ENCODE measurements at regions of chr2 and their contacts with region 1.

Region 1: DNA sequence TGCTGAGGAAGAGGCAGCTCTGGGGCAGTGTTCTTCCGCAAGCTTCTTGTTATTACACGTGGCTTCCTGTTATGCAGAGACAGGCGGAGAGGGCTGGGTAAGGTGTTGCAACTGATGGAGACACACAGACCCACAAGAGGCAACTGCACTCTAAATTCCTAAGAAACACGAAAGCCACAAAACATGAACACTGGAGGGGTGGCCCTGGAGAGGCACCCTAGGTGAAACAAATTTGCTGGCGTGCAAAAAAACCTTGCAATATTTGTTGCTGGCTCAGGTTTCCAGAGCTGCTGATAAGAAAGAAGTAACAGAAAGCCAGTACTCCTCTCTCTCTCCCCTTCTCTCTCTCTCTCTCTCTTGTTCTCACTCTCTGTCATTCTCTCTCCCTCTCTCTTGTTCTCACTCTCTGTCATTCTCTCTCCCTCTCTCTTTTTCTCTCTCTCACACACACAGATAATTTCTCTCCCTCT is 31.8 kb downstream of the ARHGAP25 start:
- DNase-seq: peak; percentile 84
- H3K4me3 Mint-ChIP-seq: peak overlapping the region; percentile 70
- H3K27ac Mint-ChIP-seq: peak overlapping the region; percentile 97
- H3K4me1 Mint-ChIP-seq: peaks cover 97% of the 10 kb centered on the region
- H3K27me3 Mint-ChIP-seq: no peaks in the 10 kb centered on the region

Region 2: DNA sequence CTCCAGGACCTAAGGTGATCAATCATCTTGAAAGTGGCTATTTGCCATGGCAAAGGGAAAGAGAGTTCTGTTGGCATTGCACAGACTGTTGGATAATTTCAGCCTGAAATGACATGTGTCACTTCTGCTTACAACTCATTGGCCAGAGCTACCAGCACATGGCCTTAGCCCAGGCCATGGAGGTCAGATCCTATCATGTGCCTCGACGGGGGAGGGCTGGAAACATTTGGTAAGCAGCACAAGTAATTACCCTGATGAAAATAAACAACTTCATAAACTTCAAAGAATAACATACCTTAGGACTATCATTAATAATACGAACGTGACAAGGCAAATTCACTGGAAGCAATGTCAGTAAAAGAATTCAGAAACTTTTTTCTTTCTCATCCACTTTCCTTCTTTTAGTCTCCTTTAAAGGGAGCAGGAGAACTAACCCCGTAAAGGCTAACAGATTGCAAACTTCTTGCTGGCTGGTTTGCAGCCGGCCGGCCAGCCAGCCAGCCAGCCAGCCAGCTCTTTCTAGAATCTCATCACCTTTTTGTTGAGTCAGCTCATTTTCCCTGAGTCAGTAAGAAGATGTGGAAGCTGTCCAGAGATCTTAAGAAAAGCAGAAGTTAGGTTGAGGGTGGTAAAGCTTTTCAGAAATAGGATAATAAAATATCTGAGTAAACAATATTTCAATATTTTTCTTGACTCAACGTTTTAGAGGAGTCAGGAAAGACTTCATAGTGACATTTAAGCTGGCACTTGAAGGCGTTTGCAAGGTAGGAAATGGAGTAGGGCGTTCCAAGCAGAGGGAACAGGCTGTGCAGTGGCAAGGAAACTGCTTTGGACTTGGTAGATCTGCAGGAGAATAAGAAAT is 478.6 kb before region 1 on chr2:
- CTCF ChIA-PET with region 1: no interaction called
- POLR2A ChIA-PET with region 1: no interaction called
- DNase-seq: no peak
- H3K4me3 Mint-ChIP-seq: no peak overlapping the region
- H3K27ac Mint-ChIP-seq: no peak overlapping the region
- H3K4me1 Mint-ChIP-seq: no peaks in the 10 kb centered on the region
- H3K27me3 Mint-ChIP-seq: peaks cover 23% of the 10 kb centered on the region

Region 3: GRCh38 chr2:68721482-68722101 is 44.8 kb before region 1 on chr2:
- CTCF ChIA-PET with region 1: interaction called, 15 read pairs
- POLR2A ChIA-PET with region 1: interaction called, 46 read pairs
- DNase-seq: peak; percentile 67
- H3K4me3 Mint-ChIP-seq: peak overlapping the region; percentile 58
- H3K27ac Mint-ChIP-seq: peak overlapping the region; percentile 95
- H3K4me1 Mint-ChIP-seq: peaks cover 99% of the 10 kb centered on the region
- H3K27me3 Mint-ChIP-seq: no peaks in the 10 kb centered on the region

Region 4: GRCh38 chr2:68734688-68735525 is 31.5 kb before region 1 on chr2 and contains the start of gene ARHGAP25:
- CTCF ChIA-PET with region 1: interaction called, 11 read pairs
- POLR2A ChIA-PET with region 1: interaction called, 356 read pairs
- DNase-seq: peak; percentile 68
- H3K4me3 Mint-ChIP-seq: no peak within 1 kb of the TSS
- H3K27ac Mint-ChIP-seq: no peak within 1 kb of the TSS
- H3K4me1 Mint-ChIP-seq: peaks cover 34% of the 10 kb centered on the region
- H3K27me3 Mint-ChIP-seq: no peaks in the 10 kb centered on the region
- total RNA-seq, gene ARHGAP25: 128 to 132 TPM

Region 5: DNA sequence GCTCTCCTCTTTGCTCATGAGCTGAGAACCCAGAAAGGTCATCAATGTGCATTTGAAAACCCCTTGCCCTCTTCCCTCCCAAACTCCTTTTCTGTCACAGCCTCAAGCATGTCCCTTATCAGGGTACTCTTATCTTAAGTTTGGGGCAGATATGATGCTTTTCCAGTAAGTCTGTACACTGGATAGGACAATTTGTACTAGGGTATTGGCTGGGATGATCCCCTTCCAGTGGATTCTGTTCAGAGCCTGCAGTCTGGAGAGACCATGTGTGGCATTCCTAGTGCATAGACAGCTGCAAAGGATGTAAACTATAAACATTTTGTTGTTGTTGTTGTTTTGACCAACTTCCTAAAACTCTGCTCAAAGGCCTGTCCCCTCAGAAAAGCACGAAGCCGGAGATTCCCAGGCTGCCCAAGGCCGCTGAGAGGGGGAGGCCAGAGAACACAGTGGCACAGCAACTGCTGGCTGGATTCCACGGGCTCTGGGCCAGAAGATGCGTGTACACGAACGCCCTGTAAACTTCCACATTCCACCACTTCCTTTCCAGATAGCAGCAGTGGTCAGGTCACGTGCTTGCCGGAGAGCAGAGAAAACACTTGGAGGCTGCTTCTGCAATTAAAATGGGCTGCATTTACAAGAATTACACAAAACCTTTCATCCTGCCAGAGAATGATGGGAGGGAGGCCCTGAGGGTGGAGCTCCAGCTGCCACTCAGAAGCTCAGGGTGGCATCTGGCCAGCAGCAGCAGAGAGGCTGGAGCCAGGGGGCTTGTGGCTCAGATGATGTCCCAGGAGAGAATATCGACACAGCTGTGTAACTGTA is 62.7 kb after region 1 on chr2:
- CTCF ChIA-PET with region 1: interaction called, 3 read pairs
- POLR2A ChIA-PET with region 1: interaction called, 12 read pairs
- DNase-seq: peak; percentile 83
- H3K4me3 Mint-ChIP-seq: peak overlapping the region; percentile 61
- H3K27ac Mint-ChIP-seq: peak overlapping the region; percentile 93
- H3K4me1 Mint-ChIP-seq: peaks cover 69% of the 10 kb centered on the region
- H3K27me3 Mint-ChIP-seq: no peaks in the 10 kb centered on the region

Region 6: GRCh38 chr2:68925295-68925896 is 159.0 kb after region 1 on chr2:
- CTCF ChIA-PET with region 1: interaction called, 15 read pairs
- POLR2A ChIA-PET with region 1: no interaction called
- DNase-seq: peak; percentile 64
- H3K4me3 Mint-ChIP-seq: no peak overlapping the region
- H3K27ac Mint-ChIP-seq: no peak overlapping the region
- H3K4me1 Mint-ChIP-seq: peaks cover 9% of the 10 kb centered on the region
- H3K27me3 Mint-ChIP-seq: peaks cover 24% of the 10 kb centered on the region